AG04449 (cell line): ENCODE measurements at regions of chr12 and their contacts with region 1.

Region 1: GRCh38 chr12:52879394-52880351 is 25.2 kb downstream of the KRT8 start:
- DNase-seq: peak; percentile 40
- H3K4me3 ChIP-seq: peak overlapping the region; percentile 41
- CTCF ChIP-seq: peak; percentile 100

Region 2: DNA sequence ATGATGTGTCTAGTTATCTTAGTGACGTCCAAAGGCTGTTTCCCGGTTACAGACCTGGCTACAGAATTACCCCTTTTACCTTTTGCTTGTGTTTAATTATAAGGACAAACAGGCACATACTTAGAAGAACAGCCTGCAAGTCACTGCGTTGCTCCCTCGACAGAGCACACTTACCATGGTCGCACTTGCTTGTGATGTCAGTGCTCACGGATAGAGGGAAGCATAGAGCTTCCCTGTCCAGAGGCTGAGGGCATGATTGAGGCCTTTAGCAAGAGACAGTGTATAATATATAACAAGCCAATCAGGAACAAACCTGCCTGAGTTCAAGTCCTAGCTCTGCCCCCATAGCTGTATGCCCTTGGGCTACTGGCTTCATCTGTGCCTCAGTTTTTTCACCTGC is 1361.9 kb before region 1 on chr12:
- CTCF ChIA-PET with region 1: no interaction called
- POLR2A ChIA-PET with region 1: no interaction called
- DNase-seq: no peak
- H3K4me3 ChIP-seq: no peak overlapping the region
- CTCF ChIP-seq: no peak

Region 3: DNA sequence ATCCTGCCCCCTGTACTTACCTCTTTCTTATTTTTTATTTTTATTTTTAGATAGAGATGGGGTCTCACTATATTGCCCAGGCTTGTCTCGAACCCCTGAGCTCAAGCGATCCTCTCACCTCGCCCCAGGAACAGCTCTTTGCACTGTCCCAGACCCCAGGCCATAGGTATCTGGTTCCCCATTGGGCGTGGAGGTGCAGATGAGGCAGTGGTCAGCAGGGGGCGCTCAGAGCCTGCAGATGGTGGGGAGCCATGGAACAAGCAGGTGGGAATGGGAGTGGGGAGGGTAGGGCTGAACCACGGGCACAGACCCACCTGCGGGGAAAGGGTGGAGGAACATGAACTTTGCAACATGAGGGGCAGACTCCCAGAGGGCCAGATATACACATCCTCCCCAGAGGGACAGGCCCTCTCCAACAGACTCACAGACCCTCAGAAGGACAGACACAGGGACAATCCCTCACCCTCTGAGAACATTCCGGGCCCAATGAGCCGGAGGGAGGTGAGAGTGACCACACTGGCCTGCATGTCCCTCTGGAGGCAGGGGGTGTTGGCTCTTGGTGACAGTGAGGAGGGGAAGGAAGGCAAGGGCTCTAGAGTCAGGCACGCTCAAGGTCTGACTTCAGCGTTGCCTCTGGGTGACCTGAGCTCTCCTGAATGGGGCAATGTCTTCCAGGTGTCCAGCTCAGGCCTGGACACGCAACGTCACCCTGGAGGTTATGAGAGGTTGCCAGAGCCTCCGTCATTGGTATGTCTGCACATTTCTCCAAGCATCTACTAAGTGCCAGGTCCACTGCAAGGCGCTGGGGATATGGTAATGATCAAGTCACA is 722.7 kb before region 1 on chr12:
- CTCF ChIA-PET with region 1: interaction called, 78 read pairs
- POLR2A ChIA-PET with region 1: no interaction called
- DNase-seq: no peak
- H3K4me3 ChIP-seq: no peak overlapping the region
- CTCF ChIP-seq: peak; percentile 97

Region 4: DNA sequence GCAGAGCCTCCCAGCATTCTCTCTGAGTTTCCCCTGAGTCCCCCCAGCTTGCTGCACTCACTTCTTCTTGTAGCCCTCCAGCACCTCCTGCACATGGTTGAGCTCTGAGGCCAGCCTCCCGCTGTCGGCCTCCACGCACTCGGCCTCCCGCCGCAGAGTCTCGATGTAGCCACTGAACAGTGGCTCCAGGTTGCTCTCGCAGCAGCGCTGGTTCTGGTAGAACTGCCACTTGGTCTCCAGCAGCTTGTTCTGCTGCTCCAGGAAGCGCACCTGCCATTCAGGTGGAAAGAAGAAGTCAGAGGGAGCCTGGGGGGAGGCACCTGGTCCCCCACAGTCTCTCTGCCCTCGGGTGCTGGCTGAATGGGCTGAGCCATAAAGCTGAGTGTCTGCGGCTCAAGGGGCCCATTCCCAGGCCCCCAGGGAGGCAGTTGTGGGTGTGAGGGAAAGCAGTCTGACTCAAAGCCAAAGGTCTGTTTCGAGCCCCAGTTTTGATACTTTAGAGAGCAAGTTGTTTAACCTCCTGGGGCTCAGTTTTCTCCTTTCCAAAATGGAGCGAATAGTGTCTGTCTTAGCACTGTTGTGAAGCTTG is 514.7 kb before region 1 on chr12:
- CTCF ChIA-PET with region 1: interaction called, 488 read pairs
- POLR2A ChIA-PET with region 1: no interaction called
- DNase-seq: no peak
- H3K4me3 ChIP-seq: no peak overlapping the region
- CTCF ChIP-seq: no peak

Region 5: DNA sequence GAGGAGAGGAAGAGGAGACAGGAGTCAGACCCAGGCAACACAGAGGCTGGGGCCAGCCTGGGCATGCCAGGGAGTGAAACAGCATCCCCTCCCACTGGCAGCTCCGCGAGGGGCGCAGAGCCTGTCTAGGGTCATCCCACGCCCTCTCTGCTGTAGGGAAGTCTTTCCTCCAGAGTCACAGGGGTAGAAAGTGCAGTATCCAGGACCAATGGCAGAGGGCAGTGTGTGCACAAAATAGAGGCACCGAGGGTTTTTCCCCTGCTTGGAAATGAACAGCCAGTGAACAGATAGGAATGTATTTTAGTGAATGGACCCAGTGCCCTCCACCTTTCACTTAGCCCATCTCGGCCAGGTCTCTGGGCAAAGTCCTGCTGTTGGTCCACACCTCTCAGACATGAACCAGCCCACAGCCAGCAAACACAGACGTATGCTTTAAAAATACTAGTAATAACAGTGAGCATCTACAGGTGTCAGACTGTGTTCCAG is 296.7 kb before region 1 on chr12:
- CTCF ChIA-PET with region 1: interaction called, 951 read pairs
- POLR2A ChIA-PET with region 1: interaction called, 4 read pairs
- DNase-seq: peak; percentile 4
- H3K4me3 ChIP-seq: no peak overlapping the region
- CTCF ChIP-seq: peak; percentile 82

Region 6: DNA sequence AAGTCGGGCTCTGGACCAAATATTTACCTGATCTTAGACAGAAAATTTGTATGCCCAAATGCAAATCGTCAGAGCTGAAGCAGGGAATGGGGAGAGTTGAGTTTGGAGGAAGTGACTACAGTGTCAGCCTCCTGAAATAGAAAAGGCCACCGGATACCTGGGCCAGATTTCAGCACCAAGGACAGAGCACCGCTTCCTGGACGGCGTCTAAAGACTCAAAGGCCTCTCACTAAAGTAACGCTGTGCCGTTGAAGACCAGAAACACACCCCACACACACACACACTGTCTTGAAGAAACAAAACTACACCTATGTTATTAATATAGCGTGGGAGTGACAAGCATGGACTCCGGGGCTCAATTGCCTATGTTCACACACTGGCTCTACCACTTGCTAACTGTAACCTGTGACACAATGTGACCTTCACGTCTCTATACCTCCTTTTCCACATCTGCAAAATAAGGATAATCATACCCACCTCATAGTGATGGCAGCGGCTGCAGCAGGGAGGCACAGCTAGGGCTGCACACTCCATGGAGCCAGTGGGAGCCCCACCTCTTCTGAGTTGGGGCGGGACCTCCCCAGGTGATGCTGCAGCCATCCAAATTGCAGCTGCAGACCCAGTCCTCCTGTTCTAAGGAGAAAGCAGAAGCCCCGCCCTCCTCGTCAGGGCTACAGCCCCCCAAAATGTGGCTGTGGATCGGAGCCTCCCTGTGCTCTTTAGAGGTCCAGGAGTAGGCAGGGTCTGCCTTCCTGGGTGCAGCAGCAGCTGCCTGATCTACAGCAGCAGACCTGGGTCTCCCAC is 138.1 kb before region 1 on chr12:
- CTCF ChIA-PET with region 1: no interaction called
- POLR2A ChIA-PET with region 1: no interaction called
- DNase-seq: no peak
- H3K4me3 ChIP-seq: no peak overlapping the region
- CTCF ChIP-seq: no peak

Region 7: GRCh38 chr12:52759695-52760094 is 120.0 kb before region 1 on chr12:
- CTCF ChIA-PET with region 1: no interaction called
- POLR2A ChIA-PET with region 1: no interaction called
- DNase-seq: no peak
- H3K4me3 ChIP-seq: no peak overlapping the region
- CTCF ChIP-seq: no peak

Region 8: GRCh38 chr12:52924764-52925716 is 45.4 kb after region 1 on chr12:
- CTCF ChIA-PET with region 1: interaction called, 71 read pairs
- POLR2A ChIA-PET with region 1: no interaction called
- DNase-seq: peak; percentile 86
- H3K4me3 ChIP-seq: no peak overlapping the region
- CTCF ChIP-seq: no peak